Activated T-helper 1 cell treated with anti-CD3 and anti-CD28 coated beads, Interleukin-12 subunit alpha, Interleukin-12 subunit beta, Interleukin-2, Interleukin-4 antibody, amounts not matched to agents 30 ng/mL and 10 ng/mL and 1 ng/mL, durations not matched to agents 14 hours and 24 hours and 36 hours (primary cell): ENCODE measurements at regions of chr11 and their contacts with region 1.

Region 1: GRCh38 chr11:64341851-64342791 is 2.1 kb downstream of the CCDC88B start:
- DNase-seq: peak; percentile 91
- H3K4me3 Mint-ChIP-seq: peak overlapping the region; percentile 39
- H3K27ac Mint-ChIP-seq: no peak overlapping the region
- H3K4me1 Mint-ChIP-seq: peaks cover 32% of the 10 kb centered on the region
- H3K27me3 Mint-ChIP-seq: no peaks in the 10 kb centered on the region

Region 2: DNA sequence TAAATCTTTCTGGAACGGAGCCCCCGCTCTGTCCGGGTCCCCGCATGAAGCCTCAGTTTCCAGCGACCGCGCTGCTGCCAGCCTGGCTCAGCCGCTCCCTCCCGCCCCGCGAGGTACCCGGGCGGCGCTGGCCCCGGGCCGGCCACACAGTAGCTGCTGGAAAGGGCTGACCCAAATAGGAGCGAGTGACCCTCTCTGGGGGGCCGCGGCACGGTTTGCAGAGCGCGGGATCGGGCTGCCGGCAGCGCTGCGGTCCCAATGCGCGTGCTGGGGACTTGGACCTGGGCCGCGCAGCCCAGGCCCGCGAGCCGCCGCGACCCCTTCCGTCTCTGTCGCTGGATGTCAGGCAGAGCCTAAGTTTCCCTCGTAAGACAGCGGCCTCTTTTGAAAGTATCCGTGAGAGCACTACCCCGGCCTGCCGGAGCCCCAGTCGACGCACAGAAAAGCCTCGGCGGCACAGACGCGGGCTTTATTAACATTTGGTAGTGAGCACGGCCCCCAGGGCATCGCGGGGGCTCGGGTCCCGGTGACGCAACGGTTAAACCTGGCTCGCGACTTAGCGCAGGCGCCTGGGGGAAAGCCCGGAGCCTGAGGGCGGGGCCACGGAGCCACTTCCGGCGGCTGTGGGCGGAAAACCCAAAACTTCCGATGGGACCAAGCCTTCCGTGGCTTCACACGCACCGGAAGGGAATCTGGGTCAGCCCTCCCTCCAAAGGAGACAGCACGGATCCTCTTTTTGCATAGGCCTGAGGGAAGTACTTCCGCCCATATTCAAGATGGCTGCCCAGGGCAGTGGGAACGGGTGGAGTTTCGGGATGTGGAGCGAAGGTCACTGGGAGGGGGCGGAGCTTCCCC is 72.5 kb before region 1 on chr11:
- intact Hi-C with region 1: no loop called
- DNase-seq: peak; percentile 98
- H3K4me3 Mint-ChIP-seq: peak overlapping the region; percentile 89
- H3K27ac Mint-ChIP-seq: peak overlapping the region; percentile 97
- H3K4me1 Mint-ChIP-seq: peaks cover 31% of the 10 kb centered on the region
- H3K27me3 Mint-ChIP-seq: no peaks in the 10 kb centered on the region

Region 3: DNA sequence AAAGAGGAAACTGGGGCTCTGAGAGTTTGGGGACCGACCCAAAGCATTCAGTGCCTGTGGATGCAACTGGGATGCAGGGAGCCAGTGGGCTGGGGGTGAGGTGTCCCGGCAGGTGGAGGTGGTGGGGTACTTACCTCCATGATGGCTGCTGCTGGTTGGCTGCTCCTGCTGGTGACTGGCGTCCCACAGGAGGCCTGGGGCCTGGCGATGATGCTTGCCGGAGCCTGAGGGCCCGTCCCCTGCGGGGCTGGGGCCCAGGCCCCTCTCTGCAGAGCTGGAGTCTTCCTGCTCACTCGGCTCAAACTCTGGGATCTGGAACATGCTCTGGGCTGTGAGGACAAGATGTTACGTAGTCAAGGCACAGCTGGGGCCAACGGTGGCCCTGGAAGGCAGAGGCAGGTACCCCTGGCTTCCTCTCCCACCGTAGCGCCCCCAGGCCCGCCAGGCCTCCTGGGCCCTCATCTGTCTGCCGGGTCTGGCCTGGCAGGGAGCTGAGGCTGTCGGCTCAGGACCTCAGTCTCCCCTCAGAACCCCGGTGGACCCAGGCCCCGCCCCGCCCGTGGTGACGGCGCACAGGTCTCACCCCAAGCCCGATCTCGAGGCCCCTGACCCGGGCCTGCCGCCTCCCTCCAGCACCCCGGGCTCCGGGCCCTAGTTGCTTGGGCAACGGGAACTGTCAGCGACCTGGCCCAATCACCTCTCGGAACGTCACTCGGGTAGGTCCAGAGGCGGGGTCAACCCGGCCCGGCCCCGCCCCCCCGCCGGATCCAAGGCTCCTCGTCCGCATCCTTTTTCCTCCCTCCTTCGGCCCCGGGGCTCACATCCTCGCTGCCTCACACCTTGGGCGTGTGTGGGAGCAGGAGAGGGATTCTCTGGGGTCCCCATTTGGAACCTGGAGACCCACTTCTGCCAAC is 57.8 kb before region 1 on chr11 and contains the start of gene BAD:
- intact Hi-C with region 1: loop called (anchors 2 kb)
- DNase-seq: peak; percentile 91
- H3K4me3 Mint-ChIP-seq: peak within 1 kb of the TSS; percentile 87
- H3K27ac Mint-ChIP-seq: peak within 1 kb of the TSS; percentile 95
- H3K4me1 Mint-ChIP-seq: peaks cover 30% of the 10 kb centered on the region
- H3K27me3 Mint-ChIP-seq: peaks cover 1% of the 10 kb centered on the region
- total RNA-seq, gene BAD: 30.1 and 38.0 TPM in 2 replicates

Region 4: DNA sequence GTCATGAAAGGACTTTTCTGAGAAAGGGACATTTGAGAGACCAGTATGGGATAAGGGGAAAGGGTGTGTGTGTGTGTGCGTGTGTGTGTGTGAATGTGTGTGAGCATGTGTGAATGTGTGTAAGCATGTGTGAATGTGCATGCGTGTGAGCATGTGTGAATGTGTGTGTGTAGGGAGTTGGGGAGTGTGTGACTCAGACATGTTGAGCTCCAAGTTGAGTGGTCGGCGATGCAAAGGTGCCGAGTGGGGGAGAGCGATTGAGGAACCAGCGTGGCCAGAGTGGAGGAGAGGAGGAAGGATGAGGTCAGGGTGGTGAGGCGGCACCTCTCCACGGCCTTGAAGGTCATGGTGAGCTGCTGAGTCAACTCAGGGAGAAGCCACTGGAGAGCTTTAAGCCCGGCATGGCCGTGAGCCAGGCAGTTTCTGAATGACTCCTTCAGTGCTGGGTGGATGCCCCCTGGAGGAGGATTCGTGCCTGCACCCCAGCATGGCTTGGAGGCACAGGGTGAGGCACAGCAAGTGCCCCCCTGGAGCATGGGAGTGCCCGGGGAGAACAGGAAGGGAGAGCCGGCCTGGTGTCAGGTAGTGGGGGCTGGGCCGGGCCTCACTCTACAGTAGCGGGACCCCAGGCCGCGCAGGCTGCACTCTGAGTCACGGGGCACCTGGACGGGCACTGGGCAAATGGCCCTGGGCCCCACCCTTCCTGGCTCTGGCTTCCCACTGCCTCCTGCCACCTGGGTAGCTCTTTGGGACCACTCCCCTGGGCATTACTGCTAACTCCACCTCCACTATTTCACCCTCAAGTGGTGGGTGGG is 10.4 kb before region 1 on chr11:
- intact Hi-C with region 1: loop called (anchors 1 kb)
- DNase-seq: peak; percentile 66
- H3K4me3 Mint-ChIP-seq: peak overlapping the region; percentile 4
- H3K27ac Mint-ChIP-seq: peak overlapping the region; percentile 85
- H3K4me1 Mint-ChIP-seq: peaks cover 16% of the 10 kb centered on the region
- H3K27me3 Mint-ChIP-seq: no peaks in the 10 kb centered on the region

Region 5: DNA sequence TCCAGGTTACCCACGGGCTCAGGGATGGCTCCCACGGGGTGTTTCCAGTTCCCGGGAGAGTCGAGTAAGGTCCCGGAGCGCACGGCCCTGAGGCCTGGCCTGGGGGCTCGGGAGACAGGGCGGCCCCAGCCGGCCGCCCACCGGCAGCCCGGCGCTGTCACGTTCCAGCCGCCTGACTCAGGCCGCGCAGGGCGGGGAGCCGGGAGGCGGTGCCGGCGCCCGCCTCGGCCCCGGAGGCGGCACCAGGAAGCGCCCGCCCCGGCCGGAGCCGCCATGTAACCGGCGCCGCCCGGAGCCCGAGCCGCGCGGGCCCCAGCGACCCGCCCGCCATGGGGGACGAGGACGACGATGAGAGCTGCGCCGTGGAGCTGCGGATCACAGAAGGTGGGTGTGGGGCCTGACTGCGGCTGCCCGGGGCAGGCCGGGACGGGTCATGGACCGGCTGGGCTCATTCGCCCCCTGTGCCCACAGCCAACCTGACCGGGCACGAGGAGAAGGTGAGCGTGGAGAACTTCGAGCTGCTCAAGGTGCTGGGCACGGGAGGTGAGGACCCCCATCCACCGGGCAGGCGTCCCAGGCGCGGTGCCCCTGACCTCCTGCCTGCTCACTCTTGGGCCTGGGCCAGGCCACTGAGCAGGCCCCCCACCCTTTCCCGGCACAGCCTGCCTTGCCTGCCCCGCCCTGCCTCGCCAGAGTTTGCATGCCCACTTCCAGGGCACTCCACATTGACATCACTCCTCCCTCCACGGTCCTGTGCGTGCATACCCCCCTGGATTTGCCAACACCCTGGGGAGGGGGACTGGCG is 17.0 kb after region 1 on chr11 and contains the start of gene RPS6KA4:
- intact Hi-C with region 1: loop called (anchors 1 kb)
- DNase-seq: peak; percentile 52
- H3K4me3 Mint-ChIP-seq: peak within 1 kb of the TSS; percentile 94
- H3K27ac Mint-ChIP-seq: peak within 1 kb of the TSS; percentile 85
- H3K4me1 Mint-ChIP-seq: peaks cover 30% of the 10 kb centered on the region
- H3K27me3 Mint-ChIP-seq: no peaks in the 10 kb centered on the region
- total RNA-seq, gene RPS6KA4: 38.3 and 46.0 TPM in 2 replicates